ENCODE measurements at regions of chr12 and their contacts with region 1.

Region 1: GRCh38 chr12:117640511-117640910 is 279.1 kb upstream of the NOS1 start:
- DNase-seq: no peak
- ATAC-seq: no peak
- H3K4me3 ChIP-seq: no peak overlapping the region
- H3K27ac ChIP-seq: no peak overlapping the region
- H3K4me1 ChIP-seq: no peaks in the 10 kb centered on the region
- H3K27me3 ChIP-seq: no peaks in the 10 kb centered on the region
- CTCF ChIP-seq: no peak
- POLR2A ChIP-seq: no peak
- RAD21 ChIP-seq: no peak

Region 2: GRCh38 chr12:117629454-117629853 is 11.1 kb before region 1 on chr12:
- CTCF ChIA-PET with region 1: no interaction called
- POLR2A ChIA-PET with region 1: no interaction called
- dilution Hi-C with region 1: no loop called
- in situ Hi-C with region 1: no loop called
- intact Hi-C with region 1: no loop called
- DNase-seq: no peak
- ATAC-seq: no peak
- H3K4me3 ChIP-seq: no peak overlapping the region
- H3K27ac ChIP-seq: no peak overlapping the region
- H3K4me1 ChIP-seq: no peaks in the 10 kb centered on the region
- H3K27me3 ChIP-seq: no peaks in the 10 kb centered on the region
- CTCF ChIP-seq: no peak
- POLR2A ChIP-seq: no peak
- RAD21 ChIP-seq: no peak

Region 3: DNA sequence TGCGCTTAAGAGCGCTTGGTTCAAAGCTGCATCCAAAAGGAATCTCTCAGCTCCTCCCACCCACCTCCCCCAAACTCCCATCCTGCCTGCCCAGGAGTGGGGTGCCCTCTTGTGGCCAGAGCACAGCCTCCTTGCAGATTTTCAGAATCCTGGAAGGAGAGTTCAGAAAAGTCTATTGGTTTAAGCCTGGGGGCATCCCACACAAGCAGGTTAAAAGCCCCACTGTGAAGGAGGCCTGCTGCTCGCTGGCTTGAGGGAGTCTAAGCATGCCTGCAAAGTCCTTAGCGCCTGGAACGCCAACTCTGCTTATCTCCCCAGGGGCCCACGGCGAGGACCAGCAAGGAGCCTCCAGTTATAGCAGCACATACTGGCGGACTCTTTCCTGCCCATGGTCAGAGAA is 31.2 kb after region 1 on chr12:
- CTCF ChIA-PET with region 1: no interaction called
- POLR2A ChIA-PET with region 1: no interaction called
- dilution Hi-C with region 1: no loop called
- in situ Hi-C with region 1: no loop called
- intact Hi-C with region 1: loop called (anchors 1 kb)
- DNase-seq: no peak
- ATAC-seq: no peak
- H3K4me3 ChIP-seq: no peak overlapping the region
- H3K27ac ChIP-seq: no peak overlapping the region
- H3K4me1 ChIP-seq: no peaks in the 10 kb centered on the region
- H3K27me3 ChIP-seq: no peaks in the 10 kb centered on the region
- CTCF ChIP-seq: no peak
- POLR2A ChIP-seq: no peak
- RAD21 ChIP-seq: no peak

Region 4: GRCh38 chr12:118120579-118121363 is 480.3 kb after region 1 on chr12:
- CTCF ChIA-PET with region 1: no interaction called
- POLR2A ChIA-PET with region 1: no interaction called
- dilution Hi-C with region 1: no loop called
- in situ Hi-C with region 1: no loop called
- intact Hi-C with region 1: no loop called
- DNase-seq: peak; percentile 61
- ATAC-seq: peak; percentile 97
- H3K4me3 ChIP-seq: no peak overlapping the region
- H3K27ac ChIP-seq: peak overlapping the region; percentile 39; the same call in 1 of the 2 replicates
- H3K4me1 ChIP-seq: peaks cover 2% of the 10 kb centered on the region; the same call in 1 of the 2 replicates
- H3K27me3 ChIP-seq: no peaks in the 10 kb centered on the region
- CTCF ChIP-seq: peak; percentile 50
- POLR2A ChIP-seq: no peak
- RAD21 ChIP-seq: peak; percentile 45

Measured in IMR-90 (cell line).